GM12878 (cell line): ENCODE measurements at regions of chr7 and their contacts with region 1.

Region 1: DNA sequence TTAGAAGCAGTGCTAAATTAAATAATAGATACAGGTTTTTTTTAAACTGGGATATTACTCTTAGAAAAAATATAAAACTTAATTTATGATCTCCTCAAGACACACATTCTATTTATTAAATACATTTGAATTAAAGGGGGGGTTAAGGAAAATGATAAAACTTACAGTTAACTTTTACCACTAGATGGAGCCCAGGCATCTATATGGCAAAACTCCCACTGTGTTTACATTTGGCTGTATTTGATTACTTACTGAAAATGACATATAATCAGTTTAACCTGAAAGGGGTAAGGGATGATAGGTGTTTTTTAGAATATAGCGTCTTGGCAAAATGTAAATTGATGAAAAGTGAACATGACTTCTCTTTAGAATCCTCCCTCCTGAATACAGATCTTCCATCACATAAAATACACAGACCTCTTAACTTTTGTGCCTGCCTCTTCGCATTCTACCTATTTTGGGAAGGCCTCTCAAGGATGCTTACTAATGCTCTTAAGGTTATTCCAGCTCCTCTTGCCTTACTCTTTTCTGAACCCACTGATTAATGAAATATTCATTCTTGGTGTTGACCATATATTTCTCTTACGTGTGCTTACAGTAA is 235.7 kb downstream of the AGMO start:
- DNase-seq: no peak
- ATAC-seq: peak; percentile 62
- H3K4me3 ChIP-seq: no peak overlapping the region
- H3K27ac ChIP-seq: no peak overlapping the region
- H3K4me1 ChIP-seq: no peaks in the 10 kb centered on the region
- H3K27me3 ChIP-seq: no peaks in the 10 kb centered on the region
- CTCF ChIP-seq: peak; percentile 21 to 49 (median 28); a peak in 3 of 6 replicates
- EP300 ChIP-seq: no peak
- POLR2A ChIP-seq: no peak
- RAD21 ChIP-seq: peak; percentile 33

Region 2: DNA sequence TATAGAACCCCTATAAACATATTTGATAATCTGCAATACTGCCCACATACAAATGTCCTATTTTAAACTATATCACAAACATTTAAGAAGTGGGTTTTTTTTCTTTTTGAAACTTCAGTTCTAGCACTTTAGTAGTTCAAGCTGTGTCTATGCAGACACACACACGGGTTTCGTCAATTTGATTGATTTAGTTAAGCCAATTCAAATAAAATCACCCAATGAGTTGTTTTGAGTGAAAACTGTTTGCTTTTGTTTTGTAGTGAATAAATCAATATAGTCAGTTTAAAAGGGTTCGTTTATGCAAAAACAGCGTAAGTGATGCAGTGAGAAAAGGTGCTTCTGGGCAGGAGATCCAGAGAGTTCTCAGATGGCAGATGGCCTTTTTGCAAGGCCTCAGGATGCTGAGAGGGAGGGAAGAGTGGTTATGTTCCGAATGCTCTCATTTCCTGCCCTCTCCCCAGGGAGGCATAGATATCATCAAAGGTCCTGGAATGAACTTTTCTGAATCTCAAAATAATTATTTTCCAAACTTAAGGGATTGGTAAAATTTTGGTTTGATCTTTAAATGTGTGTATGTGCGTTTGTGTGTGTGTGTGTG is 133.0 kb after region 1 on chr7:
- CTCF ChIA-PET with region 1: no interaction called
- POLR2A ChIA-PET with region 1: no interaction called
- RAD21 ChIA-PET with region 1: no interaction called
- SMC1A ChIA-PET with region 1: no interaction called
- in situ Hi-C with region 1: no loop called
- intact Hi-C with region 1: no loop called
- DNase-seq: no peak
- ATAC-seq: no peak
- H3K4me3 ChIP-seq: no peak overlapping the region
- H3K27ac ChIP-seq: no peak overlapping the region
- H3K4me1 ChIP-seq: no peaks in the 10 kb centered on the region
- H3K27me3 ChIP-seq: no peaks in the 10 kb centered on the region
- CTCF ChIP-seq: no peak
- EP300 ChIP-seq: no peak
- POLR2A ChIP-seq: no peak
- RAD21 ChIP-seq: no peak

Region 3: GRCh38 chr7:15561835-15562234 is 235.7 kb after region 1 on chr7 and contains the start of gene AGMO:
- CTCF ChIA-PET with region 1: interaction called, 4 read pairs
- POLR2A ChIA-PET with region 1: interaction called, 7 read pairs
- RAD21 ChIA-PET with region 1: interaction called, 5 read pairs
- SMC1A ChIA-PET with region 1: interaction called, 11 read pairs
- in situ Hi-C with region 1: no loop called
- intact Hi-C with region 1: no loop called
- DNase-seq: no peak
- ATAC-seq: peak; percentile 37
- H3K4me3 ChIP-seq: no peak within 1 kb of the TSS
- H3K27ac ChIP-seq: no peak within 1 kb of the TSS
- H3K4me1 ChIP-seq: no peaks in the 10 kb centered on the region
- H3K27me3 ChIP-seq: no peaks in the 10 kb centered on the region
- CTCF ChIP-seq: no peak; a peak in 1 of 6 replicates
- EP300 ChIP-seq: no peak
- POLR2A ChIP-seq: no peak
- RAD21 ChIP-seq: no peak
- polyA plus RNA-seq, gene AGMO: 0.29 TPM in 1 of 2 experiments, not detected in the other

Region 4: DNA sequence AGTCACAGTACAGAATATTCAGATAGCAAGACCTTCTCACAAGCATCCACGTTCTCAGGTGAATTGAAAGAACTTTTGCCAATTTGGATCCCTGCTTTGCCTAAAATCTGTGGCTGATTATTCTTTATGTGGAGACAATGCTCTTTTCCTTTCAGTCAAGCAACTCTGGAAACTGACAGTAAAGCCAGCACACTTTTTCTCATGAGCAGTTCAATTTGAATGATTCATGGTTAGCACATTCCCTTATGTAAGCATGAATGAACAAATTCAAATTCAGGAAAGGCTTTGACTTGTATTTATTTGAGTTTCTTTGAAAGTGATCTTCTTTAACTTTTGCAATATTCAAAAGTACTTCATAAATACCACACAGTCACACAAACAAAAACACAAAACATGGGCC is 302.7 kb after region 1 on chr7:
- CTCF ChIA-PET with region 1: no interaction called
- POLR2A ChIA-PET with region 1: no interaction called
- RAD21 ChIA-PET with region 1: no interaction called
- SMC1A ChIA-PET with region 1: no interaction called
- in situ Hi-C with region 1: no loop called
- intact Hi-C with region 1: loop called (anchors 10 kb)
- DNase-seq: no peak
- ATAC-seq: no peak
- H3K4me3 ChIP-seq: no peak overlapping the region
- H3K27ac ChIP-seq: no peak overlapping the region
- H3K4me1 ChIP-seq: no peaks in the 10 kb centered on the region
- H3K27me3 ChIP-seq: no peaks in the 10 kb centered on the region
- CTCF ChIP-seq: no peak
- EP300 ChIP-seq: no peak
- POLR2A ChIP-seq: no peak
- RAD21 ChIP-seq: no peak